Dorsolateral prefrontal cortex (tissue), 120 donors: ENCODE measurements at regions of chr3 and their contacts with region 1.

Region 1: GRCh38 chr3:167734498-167735232 is at the start of gene PDCD10:
- DNase-seq: peak; percentile 97 to 99 (median 99)
- H3K4me3 ChIP-seq: peak within 1 kb of the TSS; percentile 71 to 97 (median 90)
- H3K27ac ChIP-seq: peak within 1 kb of the TSS; percentile 76 to 99 (median 96)
- H3K27me3 ChIP-seq: no peaks in the 10 kb centered on the region
- CTCF ChIP-seq: peak in 20 of 56 donors; percentile 3 to 38 (median 20)
- total RNA-seq, gene PDCD10: 26.3 to 60.2 (median 45.6) TPM

Region 2: GRCh38 chr3:167783781-167784180 is 49.1 kb after region 1 on chr3:
- intact Hi-C with region 1: loop called in 1 of 2 experiments (anchors 5 kb)
- DNase-seq: peak in 9 of 10 donors; percentile 7 to 69 (median 48)
- H3K4me3 ChIP-seq: no peak overlapping the region
- H3K27ac ChIP-seq: peak overlapping the region in 24 of 59 donors; percentile 0 to 63 (median 32)
- H3K27me3 ChIP-seq: no peaks in the 10 kb centered on the region
- CTCF ChIP-seq: no peak

Region 3: DNA sequence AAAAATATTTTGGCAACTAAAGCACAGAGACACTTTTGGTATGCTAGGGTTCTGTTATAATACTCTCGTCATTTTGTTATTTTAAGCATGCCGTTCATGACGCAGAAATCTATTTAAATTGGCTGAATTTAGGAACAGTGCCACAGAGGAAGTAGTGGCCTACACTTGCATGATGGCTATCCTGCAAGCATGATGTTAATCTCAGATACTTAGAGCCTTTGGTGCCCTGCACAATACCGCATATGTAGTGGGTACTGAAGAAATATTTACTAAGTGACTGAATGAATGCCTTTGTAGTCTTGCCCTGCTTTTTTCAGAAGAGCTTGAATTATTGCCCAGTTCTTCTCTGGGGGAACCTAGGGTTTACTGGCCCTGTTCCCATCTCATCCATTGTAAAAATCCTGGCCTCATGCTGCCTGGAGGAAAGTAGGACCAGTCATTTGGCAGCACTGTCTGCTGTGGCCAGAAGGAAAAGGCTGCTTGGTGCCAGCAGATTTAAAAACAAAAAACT is 79.8 kb after region 1 on chr3:
- intact Hi-C with region 1: loop called in 1 of 2 experiments (anchors 2 kb)
- DNase-seq: peak in 8 of 10 donors; percentile 45 to 74 (median 66)
- H3K4me3 ChIP-seq: peak overlapping the region in 16 of 59 donors; percentile 1 to 35 (median 14)
- H3K27ac ChIP-seq: peak overlapping the region in 58 of 59 donors; percentile 19 to 85 (median 76)
- H3K27me3 ChIP-seq: no peaks in the 10 kb centered on the region
- CTCF ChIP-seq: peak in 15 of 56 donors; percentile 3 to 35 (median 19)

Region 4: DNA sequence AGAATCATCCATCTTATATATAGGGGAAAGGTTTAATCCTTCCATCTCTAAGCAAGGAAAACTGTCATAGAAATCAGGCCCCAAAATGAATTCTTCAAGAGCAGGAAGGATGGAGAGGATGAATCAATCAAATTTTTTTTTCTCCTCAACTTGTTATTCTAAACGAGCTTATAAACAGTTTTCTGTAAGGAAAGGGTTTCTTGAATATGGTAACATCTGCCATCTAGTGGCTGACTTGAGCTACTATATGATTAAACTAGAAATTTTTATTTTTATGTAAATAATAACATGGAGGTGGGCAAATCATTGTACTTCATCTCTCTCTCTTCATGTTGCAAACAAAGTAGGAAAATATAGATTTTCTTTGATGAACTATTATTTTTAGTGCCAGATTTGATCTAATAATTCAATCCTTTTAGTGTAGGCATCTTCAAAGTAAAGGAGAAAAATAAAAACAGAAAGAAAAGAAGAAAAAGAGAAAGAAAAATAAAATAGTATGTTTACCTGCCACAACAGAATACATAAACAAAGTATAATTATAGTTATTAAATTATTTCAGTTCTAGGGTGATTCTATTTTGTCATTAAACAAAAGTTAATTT is 147.5 kb after region 1 on chr3:
- intact Hi-C with region 1: loop called (anchors 2 to 5 kb)
- DNase-seq: no peak
- H3K4me3 ChIP-seq: peak overlapping the region in 42 of 59 donors; percentile 0 to 55 (median 31)
- H3K27ac ChIP-seq: peak overlapping the region in 14 of 59 donors; percentile 5 to 64 (median 30)
- H3K27me3 ChIP-seq: no peaks in the 10 kb centered on the region
- CTCF ChIP-seq: peak; percentile 64 to 99 (median 84)

Region 5: GRCh38 chr3:168095611-168096209 is 361.0 kb after region 1 on chr3 and contains the start of gene GOLIM4:
- intact Hi-C with region 1: loop called in 1 of 2 experiments (anchors 5 kb)
- DNase-seq: peak; percentile 61 to 96 (median 92)
- H3K4me3 ChIP-seq: peak within 1 kb of the TSS; percentile 64 to 96 (median 82)
- H3K27ac ChIP-seq: peak within 1 kb of the TSS; percentile 64 to 98 (median 91)
- H3K27me3 ChIP-seq: peaks cover 0 to 2% (median 0%) of the 10 kb centered on the region in 45 donors
- CTCF ChIP-seq: peak in 32 of 56 donors; percentile 8 to 62 (median 30)
- total RNA-seq, gene GOLIM4: 26.3 to 108 (median 49.7) TPM